ENCODE measurements at regions of chrX and their contacts with region 1.

Region 1: DNA sequence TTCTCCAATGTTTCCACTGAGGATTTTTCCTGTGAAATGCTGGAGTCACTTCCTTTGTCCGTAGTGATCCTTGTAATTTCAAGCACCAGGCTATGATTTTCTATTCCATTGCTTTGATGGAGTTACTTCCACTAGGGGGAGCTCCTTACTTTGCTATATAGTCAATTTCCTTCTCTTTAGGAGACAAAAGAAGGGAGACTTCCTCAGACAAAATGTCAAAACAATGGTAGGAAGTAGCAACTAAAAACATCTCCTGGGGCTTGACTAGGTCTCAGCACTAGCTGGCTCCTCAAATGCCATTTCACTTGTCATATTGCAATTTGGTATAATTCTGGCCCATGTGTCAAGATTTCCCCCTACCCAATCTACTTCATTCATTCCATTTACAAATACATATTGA is 24.1 kb downstream of the ZCCHC12 start:
- DNase-seq: peak in 1 of 2 donors; percentile 12
- ATAC-seq: peak in 6 of 8 donors; percentile 39 to 76 (median 61)
- H3K4me3 ChIP-seq: no peak overlapping the region
- H3K27ac ChIP-seq: no peak overlapping the region
- H3K4me1 ChIP-seq: no peaks in the 10 kb centered on the region
- H3K27me3 ChIP-seq: peaks cover 0 to 9% (median 0%) of the 10 kb centered on the region in 7 donors
- CTCF ChIP-seq: peak in 8 of 9 donors; percentile 30 to 74 (median 68)

Region 2: GRCh38 chrX:119004920-119005524 is 157.3 kb after region 1 on chrX:
- intact Hi-C with region 1: loop called in 7 of 10 experiments (anchors 2 to 5 kb)
- DNase-seq: peak; percentile 13 to 55
- ATAC-seq: peak; percentile 38 to 83 (median 70)
- H3K4me3 ChIP-seq: no peak overlapping the region
- H3K27ac ChIP-seq: no peak overlapping the region
- H3K4me1 ChIP-seq: peaks cover 0 to 28% (median 0%) of the 10 kb centered on the region in 9 donors
- H3K27me3 ChIP-seq: peaks cover 0 to 19% (median 0%) of the 10 kb centered on the region in 7 donors
- CTCF ChIP-seq: peak; percentile 50 to 93 (median 77)

Region 3: GRCh38 chrX:119067023-119067739 is 219.5 kb after region 1 on chrX:
- intact Hi-C with region 1: loop called in 9 of 10 experiments (anchors 1 to 5 kb)
- DNase-seq: peak; percentile 45 to 46
- ATAC-seq: peak in 6 of 8 donors; percentile 34 to 81 (median 72)
- H3K4me3 ChIP-seq: no peak overlapping the region
- H3K27ac ChIP-seq: no peak overlapping the region
- H3K4me1 ChIP-seq: peaks cover 0 to 9% (median 0%) of the 10 kb centered on the region in 9 donors
- H3K27me3 ChIP-seq: peaks cover 0 to 34% (median 0%) of the 10 kb centered on the region in 7 donors
- CTCF ChIP-seq: peak; percentile 22 to 72 (median 65)

Region 4: DNA sequence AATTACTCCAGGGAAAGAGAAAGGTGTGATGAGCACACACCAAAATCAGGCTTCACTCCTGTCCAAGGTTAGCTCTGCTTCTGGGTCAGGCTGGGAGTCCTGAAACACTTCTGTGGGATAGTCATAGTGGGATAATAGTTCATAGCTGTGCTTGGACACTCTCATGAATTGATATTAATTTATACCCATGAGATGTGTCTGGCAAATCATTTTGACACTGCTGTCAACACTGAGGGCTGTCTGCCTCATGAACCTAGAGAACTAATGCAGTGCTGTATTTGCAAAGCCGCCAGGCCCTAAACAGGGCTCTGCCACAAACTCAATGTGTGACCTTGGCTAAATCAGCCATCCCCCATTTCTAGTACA is 364.0 kb after region 1 on chrX:
- intact Hi-C with region 1: loop called in 1 of 10 experiments (anchors 10 kb)
- DNase-seq: peak in 1 of 2 donors; percentile 7
- ATAC-seq: peak; percentile 75 to 96 (median 89)
- H3K4me3 ChIP-seq: no peak overlapping the region
- H3K27ac ChIP-seq: peak overlapping the region in 7 of 10 donors; percentile 22 to 71 (median 58)
- H3K4me1 ChIP-seq: no peaks in the 10 kb centered on the region
- H3K27me3 ChIP-seq: peaks cover 0 to 18% (median 0%) of the 10 kb centered on the region in 7 donors
- CTCF ChIP-seq: no peak

Region 5: GRCh38 chrX:119228512-119229252 is 381.0 kb after region 1 on chrX:
- intact Hi-C with region 1: loop called in 2 of 10 experiments (anchors 10 kb)
- DNase-seq: no peak
- ATAC-seq: no peak
- H3K4me3 ChIP-seq: no peak overlapping the region
- H3K27ac ChIP-seq: no peak overlapping the region
- H3K4me1 ChIP-seq: no peaks in the 10 kb centered on the region
- H3K27me3 ChIP-seq: peaks cover 0 to 43% (median 0%) of the 10 kb centered on the region in 7 donors
- CTCF ChIP-seq: no peak